Activated B cell treated with CpG ODN at 0.5 μM for 24 hours (primary cell): ENCODE measurements at regions of chr2 and their contacts with region 1.

Region 1: DNA sequence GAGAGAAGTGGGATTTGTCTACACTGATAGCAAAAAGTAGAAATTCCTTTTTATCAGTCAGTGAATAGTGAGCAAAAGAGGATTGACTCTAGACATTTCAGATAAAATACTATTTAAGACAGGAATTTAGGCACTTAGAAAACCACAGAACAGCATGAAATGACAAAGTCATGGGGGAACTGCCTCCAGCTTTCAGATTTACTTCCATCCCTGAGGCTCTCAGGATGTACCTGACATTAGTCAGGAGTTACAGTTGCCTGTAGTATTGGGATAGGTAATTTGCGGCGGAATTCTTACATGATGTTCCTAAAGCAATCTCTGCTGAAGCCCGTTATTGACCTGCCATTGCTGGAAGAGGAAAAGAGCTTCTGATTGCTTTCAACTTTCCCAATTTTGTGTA is 337.1 kb upstream of the MAP2 start:
- DNase-seq: no peak
- ATAC-seq: no peak
- H3K4me3 Mint-ChIP-seq: no peak overlapping the region
- H3K27ac Mint-ChIP-seq: no peak overlapping the region
- H3K4me1 Mint-ChIP-seq: no peaks in the 10 kb centered on the region
- H3K27me3 Mint-ChIP-seq: no peaks in the 10 kb centered on the region
- CTCF ChIP-seq: no peak

Region 2: DNA sequence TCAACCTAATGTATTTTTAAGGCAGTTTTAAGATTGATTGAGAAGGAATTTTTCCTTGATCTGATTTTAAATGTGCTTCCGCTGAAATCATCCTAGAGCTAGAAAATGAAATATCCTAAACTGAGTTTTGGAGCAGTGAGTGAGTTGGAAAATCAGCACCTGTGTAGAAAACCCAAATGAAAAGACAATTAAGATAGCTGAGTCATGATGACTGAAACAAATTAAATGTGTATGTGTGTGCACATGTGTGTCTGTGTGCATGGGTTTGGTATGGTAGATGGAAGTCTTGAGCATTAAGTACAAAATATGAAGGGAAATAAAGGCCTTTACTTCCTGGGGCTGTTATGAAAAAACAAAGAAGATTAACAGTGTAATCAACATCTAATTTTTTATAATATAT is 57.5 kb before region 1 on chr2:
- CTCF ChIA-PET with region 1: no interaction called
- POLR2A ChIA-PET with region 1: no interaction called
- intact Hi-C with region 1: no loop called
- DNase-seq: no peak
- ATAC-seq: no peak
- H3K4me3 Mint-ChIP-seq: no peak overlapping the region
- H3K27ac Mint-ChIP-seq: no peak overlapping the region
- H3K4me1 Mint-ChIP-seq: no peaks in the 10 kb centered on the region
- H3K27me3 Mint-ChIP-seq: no peaks in the 10 kb centered on the region
- CTCF ChIP-seq: no peak

Region 3: DNA sequence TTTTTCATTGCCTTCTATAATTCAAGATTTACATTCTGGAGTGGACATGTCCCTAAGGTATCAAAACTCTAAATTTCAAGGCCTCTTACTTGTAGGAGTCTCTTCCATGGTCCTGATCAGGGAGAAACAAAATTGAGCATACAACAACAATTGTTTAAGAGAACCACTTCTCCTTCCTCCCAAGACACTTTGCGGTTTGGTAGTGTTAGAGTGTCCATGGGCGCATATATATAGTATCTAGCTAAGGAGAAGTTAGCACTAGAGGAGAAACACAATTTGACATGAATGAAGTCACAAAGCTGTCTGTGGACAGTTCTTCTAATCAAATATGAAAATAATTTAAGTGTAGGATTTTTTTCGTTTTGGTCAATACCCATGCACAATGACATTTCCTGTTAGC is 12.1 kb before region 1 on chr2:
- CTCF ChIA-PET with region 1: no interaction called
- POLR2A ChIA-PET with region 1: no interaction called
- intact Hi-C with region 1: loop called (anchors 1 kb)
- DNase-seq: no peak
- ATAC-seq: no peak
- H3K4me3 Mint-ChIP-seq: no peak overlapping the region
- H3K27ac Mint-ChIP-seq: no peak overlapping the region
- H3K4me1 Mint-ChIP-seq: no peaks in the 10 kb centered on the region
- H3K27me3 Mint-ChIP-seq: no peaks in the 10 kb centered on the region
- CTCF ChIP-seq: no peak